Activated T-helper 1 cell treated with anti-CD3 and anti-CD28 coated beads, Interleukin-12 subunit alpha, Interleukin-12 subunit beta, Interleukin-2, Interleukin-4 antibody, amounts not matched to agents 30 ng/mL and 10 ng/mL and 1 ng/mL, durations not matched to agents 14 hours and 24 hours and 36 hours (primary cell): ENCODE measurements at regions of chr1 and their contacts with region 1.

Region 1: DNA sequence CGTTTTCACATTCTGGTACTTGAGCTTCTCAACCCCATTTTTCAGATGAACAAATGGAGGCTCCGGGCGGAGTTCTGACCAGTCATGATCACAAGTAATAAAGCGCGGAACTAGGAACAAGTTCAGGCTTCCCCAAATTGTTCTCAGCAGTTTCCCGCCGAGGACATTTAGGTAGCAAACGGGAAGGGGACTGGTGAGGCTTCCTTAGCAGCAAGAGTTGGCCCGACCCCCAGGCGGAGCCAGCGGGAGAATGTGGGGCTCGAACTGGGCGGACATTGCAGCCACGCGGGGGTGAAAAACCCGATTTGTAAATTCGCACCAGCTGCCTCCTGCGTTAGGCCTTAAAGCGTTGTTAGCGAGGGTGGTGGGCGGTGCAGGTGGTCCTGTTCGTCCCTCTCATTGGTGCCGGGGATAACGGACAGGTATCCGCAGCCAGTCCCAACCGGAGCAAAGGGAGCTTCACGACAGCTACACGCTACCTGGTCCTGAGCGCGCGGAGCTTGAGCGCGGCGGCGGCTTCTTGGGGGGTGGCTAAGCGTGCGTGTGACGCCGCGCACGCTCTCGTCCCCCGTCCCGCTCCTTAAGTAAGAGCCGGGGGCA is 15.3 kb downstream of the SEMA6C start:
- DNase-seq: peak; percentile 63
- H3K4me3 Mint-ChIP-seq: peak overlapping the region; percentile 53
- H3K27ac Mint-ChIP-seq: peak overlapping the region; percentile 40
- H3K4me1 Mint-ChIP-seq: no peaks in the 10 kb centered on the region
- H3K27me3 Mint-ChIP-seq: peaks cover 10% of the 10 kb centered on the region

Region 2: DNA sequence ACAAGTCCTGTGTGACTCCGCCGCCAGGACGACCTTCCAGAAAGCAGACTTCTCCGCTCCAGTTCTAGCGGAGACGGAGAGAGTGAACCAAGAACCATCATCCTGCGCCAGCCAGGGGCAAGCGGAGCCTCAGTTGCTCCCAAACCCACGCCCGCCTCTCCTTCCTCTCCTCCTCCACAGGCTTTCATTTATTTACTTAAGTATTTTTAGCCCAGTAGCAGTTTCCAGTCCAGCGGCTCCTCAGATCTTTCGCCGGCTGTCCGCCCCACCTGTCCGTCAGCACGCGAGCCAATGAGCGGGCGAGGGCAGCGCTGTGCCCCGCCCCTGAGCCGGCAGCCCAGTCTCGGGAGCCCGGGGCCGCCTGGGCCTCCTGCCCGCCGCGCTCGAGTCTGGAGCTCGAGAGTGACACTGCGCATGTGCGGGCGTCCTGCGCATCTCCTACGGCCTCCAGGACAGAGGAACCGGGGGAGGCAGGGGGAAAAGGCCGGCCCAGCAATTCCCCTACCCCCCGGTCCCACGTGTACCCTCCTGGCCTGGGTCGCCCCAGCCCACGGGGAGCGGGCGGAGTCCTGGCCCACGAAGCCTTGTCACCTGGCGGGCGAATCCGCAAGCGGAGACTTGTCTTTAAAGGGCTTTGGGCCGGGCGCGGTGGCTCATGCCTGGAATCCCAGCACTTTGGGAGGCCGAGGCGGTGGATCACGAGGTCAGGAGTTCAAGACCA is 615.6 kb before region 1 on chr1 and contains the start of gene FALEC:
- intact Hi-C with region 1: no loop called
- DNase-seq: peak; percentile 93
- H3K4me3 Mint-ChIP-seq: peak within 1 kb of the TSS; percentile 79
- H3K27ac Mint-ChIP-seq: peak within 1 kb of the TSS; percentile 83
- H3K4me1 Mint-ChIP-seq: peaks cover 16% of the 10 kb centered on the region
- H3K27me3 Mint-ChIP-seq: no peaks in the 10 kb centered on the region
- total RNA-seq, gene FALEC: not detected in 2 replicates

Region 3: GRCh38 chr1:151146412-151147140 is 15.5 kb after region 1 on chr1 and contains the start of gene SEMA6C:
- intact Hi-C with region 1: loop called (anchors 1 kb)
- DNase-seq: peak; percentile 91
- H3K4me3 Mint-ChIP-seq: peak within 1 kb of the TSS; percentile 97
- H3K27ac Mint-ChIP-seq: peak within 1 kb of the TSS; percentile 57
- H3K4me1 Mint-ChIP-seq: peaks cover 22% of the 10 kb centered on the region
- H3K27me3 Mint-ChIP-seq: peaks cover 20% of the 10 kb centered on the region
- total RNA-seq, gene SEMA6C: 3.6 and 4.3 TPM in 2 replicates